ENCODE measurements at regions of chr13 and their contacts with region 1.

Region 1: DNA sequence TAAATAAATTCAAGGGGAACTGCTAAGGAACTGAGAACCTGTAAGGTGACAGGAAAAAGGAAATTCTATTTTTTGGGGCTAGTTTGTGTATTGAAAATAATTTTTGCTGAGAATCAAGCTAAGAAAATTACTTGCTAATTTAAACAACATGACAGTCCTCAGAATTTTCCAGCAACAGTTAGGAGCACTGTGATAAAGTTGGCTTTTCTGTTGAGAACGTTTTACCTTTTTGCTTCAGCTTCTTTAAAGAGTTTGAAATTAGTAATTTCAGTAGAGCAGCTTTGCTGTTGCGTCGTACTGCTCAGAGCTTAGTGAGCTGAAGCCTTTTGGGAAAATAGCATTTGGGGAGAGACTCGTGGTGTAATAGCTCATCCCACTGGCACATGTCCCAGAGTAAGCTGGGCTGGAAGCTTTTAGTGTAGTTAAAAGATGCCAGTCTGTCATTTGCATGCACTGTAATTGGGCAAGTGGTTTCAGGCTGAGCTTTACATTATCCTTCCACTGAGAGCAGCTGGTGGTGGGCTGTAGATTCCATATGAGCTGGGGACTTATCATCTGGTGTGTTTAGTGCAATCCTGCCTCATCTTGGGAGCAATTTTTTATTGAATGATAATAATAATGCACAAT is 69.8 kb downstream of the LRCH1 start:
- DNase-seq: peak; percentile 25
- H3K4me3 ChIP-seq: peak overlapping the region; percentile 49
- H3K27ac ChIP-seq: peak overlapping the region; percentile 55
- H3K4me1 ChIP-seq: peaks cover 86% of the 10 kb centered on the region
- CTCF ChIP-seq: no peak

Region 2: DNA sequence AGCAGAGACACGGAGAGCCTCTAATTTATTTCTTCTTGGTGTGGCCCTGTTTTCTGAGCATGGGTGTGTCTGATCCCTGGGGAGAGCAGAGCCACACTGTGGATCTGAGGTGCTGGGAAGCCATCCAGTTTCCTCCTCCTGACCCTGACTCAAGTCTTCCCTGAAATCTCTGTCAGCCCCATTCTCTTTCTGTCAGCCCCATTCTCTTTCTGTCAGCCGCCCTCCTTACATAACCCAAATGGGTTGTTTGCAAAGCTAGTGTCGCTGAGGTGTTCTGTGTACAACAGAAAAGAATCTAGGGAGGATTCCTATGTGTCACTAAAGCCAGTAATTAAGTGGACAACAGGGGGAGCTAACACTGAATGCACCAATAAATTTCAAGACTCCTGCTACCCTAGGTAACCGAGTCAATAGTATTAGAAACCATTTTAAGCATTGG is 19.6 kb before region 1 on chr13:
- CTCF ChIA-PET with region 1: interaction called, 11 read pairs
- POLR2A ChIA-PET with region 1: interaction called, 11 read pairs
- intact Hi-C with region 1: no loop called
- DNase-seq: peak; percentile 53
- H3K4me3 ChIP-seq: no peak overlapping the region
- H3K27ac ChIP-seq: peak overlapping the region; percentile 9
- H3K4me1 ChIP-seq: peaks cover 93% of the 10 kb centered on the region
- CTCF ChIP-seq: peak; percentile 80

Region 3: DNA sequence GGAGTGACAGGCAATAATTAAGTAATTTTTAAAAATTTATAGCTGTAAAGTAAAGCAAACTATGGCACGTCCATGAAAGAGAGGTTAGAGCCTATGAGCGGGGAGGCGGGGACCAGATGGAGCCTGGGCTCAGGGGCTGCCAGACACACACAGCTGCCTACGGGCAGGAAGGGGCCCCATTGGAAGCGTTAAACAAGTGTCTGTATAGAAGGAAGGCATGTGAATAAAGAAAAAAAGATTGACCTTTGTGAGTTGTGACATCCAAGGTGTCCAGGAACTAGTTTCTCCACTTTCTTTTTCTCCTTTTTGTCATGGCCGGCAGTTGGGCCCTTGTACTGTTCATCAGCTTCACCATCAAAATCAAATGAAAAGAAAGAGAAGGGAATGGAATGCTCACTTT is 13.0 kb before region 1 on chr13:
- CTCF ChIA-PET with region 1: no interaction called
- POLR2A ChIA-PET with region 1: interaction called, 33 read pairs
- intact Hi-C with region 1: no loop called
- DNase-seq: no peak
- H3K4me3 ChIP-seq: no peak overlapping the region
- H3K27ac ChIP-seq: no peak overlapping the region
- H3K4me1 ChIP-seq: peaks cover 54% of the 10 kb centered on the region
- CTCF ChIP-seq: no peak

Region 4: DNA sequence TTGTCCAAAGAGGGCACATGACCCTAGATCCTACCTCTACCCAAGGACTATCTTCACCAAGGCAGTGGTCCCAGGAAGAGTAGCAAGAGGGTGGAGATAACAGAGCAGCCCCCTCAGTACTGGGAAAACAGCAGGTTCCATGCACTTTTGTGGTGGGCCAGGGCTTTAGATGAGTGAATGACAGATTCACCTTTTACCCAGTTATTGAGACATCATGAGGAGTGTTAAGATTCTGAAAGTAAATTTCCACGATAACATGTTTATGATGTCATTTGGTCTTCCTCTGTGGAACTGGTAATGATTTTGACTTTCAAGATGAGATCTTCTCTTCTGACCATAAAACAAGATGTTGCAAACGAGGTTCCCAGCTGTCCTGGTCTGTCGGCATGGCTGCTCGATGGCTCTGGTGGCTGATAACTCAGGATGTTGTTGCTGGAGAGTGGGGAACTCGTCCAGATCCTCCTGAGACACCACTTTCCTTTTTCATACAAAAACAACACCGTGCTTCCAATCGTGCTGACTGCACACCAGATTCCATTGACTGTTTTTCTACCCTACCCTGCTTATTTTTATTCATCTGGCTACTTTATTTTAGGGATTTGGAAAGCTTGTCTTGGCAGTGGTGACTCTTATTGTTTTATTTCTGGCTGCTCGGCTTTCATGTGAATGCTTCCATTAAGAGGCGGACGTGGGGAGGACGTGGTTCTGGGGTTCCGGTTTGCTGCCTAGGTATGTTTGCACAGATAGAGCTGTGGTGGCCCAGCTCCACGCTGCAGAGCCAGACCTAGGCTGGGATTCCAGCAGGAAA is 18.7 kb after region 1 on chr13:
- CTCF ChIA-PET with region 1: no interaction called
- POLR2A ChIA-PET with region 1: interaction called, 14 read pairs
- intact Hi-C with region 1: no loop called
- DNase-seq: no peak
- H3K4me3 ChIP-seq: no peak overlapping the region
- H3K27ac ChIP-seq: no peak overlapping the region
- H3K4me1 ChIP-seq: peaks cover 28% of the 10 kb centered on the region
- CTCF ChIP-seq: no peak

Region 5: DNA sequence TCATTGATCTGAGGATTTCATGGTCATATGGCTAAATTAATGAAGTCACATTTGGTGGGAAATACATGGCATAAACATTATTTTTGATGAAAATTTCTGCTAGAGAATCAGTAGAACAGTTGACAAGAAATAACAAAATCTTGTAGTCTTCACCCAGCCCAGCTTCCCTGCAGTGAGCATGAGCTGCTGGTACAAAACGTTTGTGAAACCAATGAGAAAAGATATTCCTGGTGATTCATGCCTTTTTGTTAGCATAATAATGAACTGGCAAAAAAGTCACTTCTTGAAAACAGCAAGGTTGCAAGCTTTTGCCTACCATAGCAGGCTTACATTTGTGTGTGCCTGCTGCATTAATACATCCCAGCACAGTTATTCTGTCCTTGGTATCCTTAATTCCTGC is 750.0 kb after region 1 on chr13:
- CTCF ChIA-PET with region 1: no interaction called
- POLR2A ChIA-PET with region 1: no interaction called
- intact Hi-C with region 1: no loop called
- DNase-seq: no peak
- H3K4me3 ChIP-seq: no peak overlapping the region
- H3K27ac ChIP-seq: no peak overlapping the region
- H3K4me1 ChIP-seq: no peaks in the 10 kb centered on the region
- CTCF ChIP-seq: no peak

Measured in OCI-LY7 (cell line).